ENCODE measurements at regions of chr5 and their contacts with region 1.

Region 1: GRCh38 chr5:124902097-124902821 is 155.8 kb upstream of the ZNF608 start:
- DNase-seq: peak; percentile 58
- CTCF ChIP-seq: no peak

Region 2: DNA sequence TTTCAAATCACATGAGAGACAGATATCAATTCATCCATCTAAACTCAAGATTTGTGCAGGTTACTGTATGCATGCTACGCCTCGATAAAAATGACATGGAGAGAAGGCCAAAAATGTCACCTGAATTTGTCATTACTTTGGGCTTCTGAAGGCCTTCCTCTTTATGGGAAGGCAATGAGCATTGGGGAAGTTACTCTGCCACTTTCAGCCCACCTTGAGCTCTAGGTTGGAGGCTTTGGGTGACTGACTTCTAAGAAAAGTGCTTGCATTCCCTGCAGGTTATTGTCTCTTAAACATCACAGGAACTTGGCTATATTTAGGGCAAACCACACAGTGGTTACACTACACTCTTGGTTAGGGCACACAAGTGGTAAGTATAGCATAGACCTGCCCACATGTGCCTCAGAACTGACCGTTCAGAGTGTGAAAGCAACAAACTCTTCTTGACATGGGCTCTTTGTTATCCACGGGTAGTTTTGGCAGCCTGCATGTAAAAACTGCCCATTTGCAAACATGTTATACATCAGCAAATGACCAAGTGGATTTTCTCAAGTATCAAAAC is 325.3 kb before region 1 on chr5:
- in situ Hi-C with region 1: no loop called
- DNase-seq: no peak
- CTCF ChIP-seq: no peak

Region 3: GRCh38 chr5:124748687-124749594 is 153.3 kb before region 1 on chr5:
- in situ Hi-C with region 1: loop called (anchors 10 kb)
- DNase-seq: peak; percentile 80
- CTCF ChIP-seq: no peak